Adrenal gland (tissue), 19 donors: ENCODE measurements at regions of chr5 and their contacts with region 1.

Region 1: GRCh38 chr5:135466178-135467050 is 14.3 kb upstream of the TIFAB start:
- DNase-seq: peak; percentile 59 to 82 (median 80)
- H3K4me3 ChIP-seq: no peak overlapping the region
- H3K27ac ChIP-seq: no peak overlapping the region
- H3K4me1 ChIP-seq: no peaks in the 10 kb centered on the region
- H3K27me3 ChIP-seq: peaks cover 17% of the 10 kb centered on the region
- CTCF ChIP-seq: peak; percentile 80 to 90 (median 86)
- POLR2A ChIP-seq: no peak

Region 2: DNA sequence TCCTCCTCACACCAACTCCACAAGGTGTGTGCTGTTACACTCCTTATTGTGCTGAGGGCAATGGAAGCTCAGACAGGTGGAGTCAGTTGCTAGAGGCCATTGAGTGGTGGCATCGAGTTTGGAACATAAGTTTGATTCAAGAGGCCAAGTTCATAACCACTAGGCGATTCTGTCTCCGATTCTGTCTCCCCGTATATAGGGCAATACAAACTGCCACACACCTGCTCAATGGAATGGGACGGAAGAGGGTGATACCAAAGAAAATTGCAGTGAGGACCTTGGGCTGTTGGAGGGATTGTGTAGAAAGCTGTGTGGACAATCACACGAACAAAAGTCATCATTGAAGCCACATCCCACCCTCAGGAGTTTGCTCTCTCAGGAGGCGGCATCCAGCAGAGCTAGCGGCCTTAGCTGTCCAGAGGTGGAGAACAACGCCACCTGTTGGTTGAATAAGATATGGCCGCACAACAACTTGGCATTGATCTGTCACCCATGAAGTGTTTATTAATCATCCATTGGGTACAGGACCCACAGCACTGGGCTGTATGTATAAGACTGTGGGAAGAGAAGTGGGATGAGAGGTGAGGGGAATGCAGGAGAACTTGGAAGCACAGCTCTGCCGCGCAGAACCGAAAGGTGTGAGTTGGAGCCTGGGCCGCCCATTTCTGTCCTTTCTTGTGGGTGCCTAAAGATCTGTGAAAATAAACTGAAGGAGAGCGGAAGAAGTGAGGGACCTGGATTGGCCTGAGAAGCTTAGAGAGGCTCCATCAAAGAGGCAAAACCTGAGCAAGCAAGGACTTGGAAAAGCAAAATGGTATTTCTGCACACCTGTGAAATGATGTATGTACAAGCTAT is 85.4 kb after region 1 on chr5:
- intact Hi-C with region 1: loop called (anchors 2 to 5 kb)
- DNase-seq: peak; percentile 69 to 91 (median 77)
- H3K4me3 ChIP-seq: no peak overlapping the region
- H3K27ac ChIP-seq: no peak overlapping the region
- H3K4me1 ChIP-seq: no peaks in the 10 kb centered on the region
- H3K27me3 ChIP-seq: peaks cover 23% of the 10 kb centered on the region
- CTCF ChIP-seq: peak; percentile 85 to 90 (median 88)
- POLR2A ChIP-seq: no peak